HepG2 (cell line): ENCODE measurements at regions of chr2 and their contacts with region 1.

Region 1: GRCh38 chr2:158179660-158180059 is 78.0 kb downstream of the UPP2 start:
- DNase-seq: peak; percentile 35
- ATAC-seq: peak; percentile 82
- H3K4me3 ChIP-seq: no peak overlapping the region
- H3K27ac ChIP-seq: no peak overlapping the region
- H3K4me1 ChIP-seq: peaks cover 51% of the 10 kb centered on the region
- H3K27me3 ChIP-seq: no peaks in the 10 kb centered on the region
- CTCF ChIP-seq: peak; percentile 81
- EP300 ChIP-seq: no peak
- POLR2A ChIP-seq: no peak
- RAD21 ChIP-seq: peak; percentile 78

Region 2: GRCh38 chr2:157741819-157742484 is 437.7 kb before region 1 on chr2:
- CTCF ChIA-PET with region 1: no interaction called
- POLR2A ChIA-PET with region 1: no interaction called
- in situ Hi-C with region 1: no loop called
- intact Hi-C with region 1: no loop called
- DNase-seq: no peak
- ATAC-seq: no peak
- H3K4me3 ChIP-seq: no peak overlapping the region
- H3K27ac ChIP-seq: no peak overlapping the region
- H3K4me1 ChIP-seq: no peaks in the 10 kb centered on the region
- H3K27me3 ChIP-seq: no peaks in the 10 kb centered on the region
- CTCF ChIP-seq: no peak
- EP300 ChIP-seq: no peak
- POLR2A ChIP-seq: no peak
- RAD21 ChIP-seq: no peak

Region 3: GRCh38 chr2:158045362-158045761 is 134.3 kb before region 1 on chr2:
- CTCF ChIA-PET with region 1: no interaction called
- POLR2A ChIA-PET with region 1: no interaction called
- in situ Hi-C with region 1: loop called (anchors 10 kb)
- intact Hi-C with region 1: loop called (anchors 2 kb)
- DNase-seq: peak; percentile 68
- ATAC-seq: peak; percentile 99
- H3K4me3 ChIP-seq: no peak overlapping the region
- H3K27ac ChIP-seq: no peak overlapping the region
- H3K4me1 ChIP-seq: peaks cover 19% of the 10 kb centered on the region
- H3K27me3 ChIP-seq: peaks cover 0 to 16% of the 10 kb centered on the region in 2 experiments; a peak in 2 of 5 replicates
- CTCF ChIP-seq: peak; percentile 90
- EP300 ChIP-seq: no peak
- POLR2A ChIP-seq: no peak
- RAD21 ChIP-seq: peak; percentile 91

Region 4: DNA sequence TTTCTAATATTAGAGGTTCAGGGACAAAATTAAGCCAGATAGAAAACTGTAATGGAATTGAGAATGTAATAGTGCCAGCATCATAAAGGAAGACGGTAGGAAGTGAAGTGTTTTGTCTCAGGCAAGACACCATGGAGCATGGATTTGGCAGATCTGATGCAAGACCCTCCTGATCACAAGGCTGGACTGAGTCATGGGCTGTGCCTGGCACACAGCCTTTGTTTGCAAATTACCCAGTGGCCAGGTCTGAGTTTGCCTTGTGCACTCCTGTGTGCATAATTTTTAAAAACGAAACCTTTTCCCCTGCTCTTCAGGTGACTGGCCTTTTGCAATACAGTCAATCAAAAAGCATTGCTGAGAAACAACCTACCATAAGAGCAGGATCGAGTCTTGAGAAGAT is 79.9 kb before region 1 on chr2:
- CTCF ChIA-PET with region 1: interaction called, 3 read pairs
- POLR2A ChIA-PET with region 1: no interaction called
- in situ Hi-C with region 1: no loop called
- intact Hi-C with region 1: loop called (anchors 5 kb)
- DNase-seq: peak; percentile 47
- ATAC-seq: no peak
- H3K4me3 ChIP-seq: no peak overlapping the region; a peak in 1 of 6 replicates
- H3K27ac ChIP-seq: no peak overlapping the region
- H3K4me1 ChIP-seq: peaks cover 64% of the 10 kb centered on the region
- H3K27me3 ChIP-seq: no peaks in the 10 kb centered on the region
- CTCF ChIP-seq: no peak
- EP300 ChIP-seq: no peak
- POLR2A ChIP-seq: no peak
- RAD21 ChIP-seq: no peak

Region 5: DNA sequence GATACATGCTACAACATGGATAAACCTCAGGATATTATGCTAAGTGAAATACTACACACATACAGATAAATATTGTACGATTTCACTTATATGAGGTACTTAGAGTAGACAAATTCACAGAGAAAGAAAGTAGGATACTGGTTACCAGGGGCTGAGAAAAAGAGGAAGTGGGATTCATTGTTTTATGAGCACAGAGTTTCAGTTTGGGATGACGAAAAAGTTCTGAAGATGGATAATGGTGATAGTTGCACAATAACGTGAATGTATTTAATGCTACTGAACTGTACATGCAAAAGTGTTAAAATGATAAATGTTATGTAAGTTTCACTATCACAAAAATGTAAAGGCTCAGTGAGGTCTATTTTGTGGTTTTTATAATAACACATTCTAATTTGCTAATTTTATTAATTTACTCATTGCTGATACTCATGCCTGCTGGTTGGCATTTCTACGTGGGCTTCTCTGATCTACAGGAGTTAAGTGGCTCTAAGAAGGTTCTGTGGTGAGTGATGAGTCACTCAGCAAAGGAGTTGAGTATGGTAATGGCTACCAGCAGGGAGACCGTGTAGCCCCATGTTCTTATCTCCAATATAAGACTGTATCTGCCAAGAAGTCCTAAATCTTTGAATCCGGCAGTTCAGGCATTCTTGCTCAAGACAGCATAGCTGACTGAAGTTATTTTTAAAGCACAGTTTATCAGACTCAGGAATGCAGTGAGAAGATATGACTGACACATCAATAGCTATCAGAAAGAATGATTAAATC is 36.9 kb before region 1 on chr2:
- CTCF ChIA-PET with region 1: no interaction called
- POLR2A ChIA-PET with region 1: no interaction called
- in situ Hi-C with region 1: no loop called
- intact Hi-C with region 1: no loop called
- DNase-seq: no peak
- ATAC-seq: no peak
- H3K4me3 ChIP-seq: no peak overlapping the region
- H3K27ac ChIP-seq: no peak overlapping the region
- H3K4me1 ChIP-seq: peaks cover 22% of the 10 kb centered on the region
- H3K27me3 ChIP-seq: no peaks in the 10 kb centered on the region
- CTCF ChIP-seq: no peak
- EP300 ChIP-seq: no peak
- POLR2A ChIP-seq: no peak
- RAD21 ChIP-seq: no peak

Region 6: DNA sequence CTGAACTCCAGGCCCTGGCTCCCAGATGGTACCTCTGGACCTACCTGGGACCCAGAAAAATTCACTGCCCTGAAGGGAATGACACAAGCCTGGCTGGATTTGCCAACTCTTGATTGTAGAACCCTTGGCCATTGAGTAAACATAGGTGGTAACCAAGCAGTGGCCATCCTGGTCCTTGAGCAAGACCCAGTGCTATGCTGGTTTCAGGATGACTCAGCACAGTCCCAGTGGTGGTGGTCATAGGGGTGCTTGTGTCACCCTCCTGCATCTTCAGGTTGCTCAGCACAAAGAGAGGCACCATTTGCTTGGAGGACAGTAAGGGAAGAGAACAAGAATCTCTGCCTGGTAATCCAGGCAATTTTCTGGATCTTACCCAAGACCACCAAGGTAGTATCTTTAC is 25.1 kb before region 1 on chr2:
- CTCF ChIA-PET with region 1: no interaction called
- POLR2A ChIA-PET with region 1: no interaction called
- in situ Hi-C with region 1: no loop called
- intact Hi-C with region 1: no loop called
- DNase-seq: no peak
- ATAC-seq: no peak
- H3K4me3 ChIP-seq: no peak overlapping the region
- H3K27ac ChIP-seq: no peak overlapping the region
- H3K4me1 ChIP-seq: no peaks in the 10 kb centered on the region
- H3K27me3 ChIP-seq: no peaks in the 10 kb centered on the region; a peak in 2 of 5 replicates
- CTCF ChIP-seq: no peak
- EP300 ChIP-seq: no peak
- POLR2A ChIP-seq: no peak
- RAD21 ChIP-seq: no peak

Region 7: DNA sequence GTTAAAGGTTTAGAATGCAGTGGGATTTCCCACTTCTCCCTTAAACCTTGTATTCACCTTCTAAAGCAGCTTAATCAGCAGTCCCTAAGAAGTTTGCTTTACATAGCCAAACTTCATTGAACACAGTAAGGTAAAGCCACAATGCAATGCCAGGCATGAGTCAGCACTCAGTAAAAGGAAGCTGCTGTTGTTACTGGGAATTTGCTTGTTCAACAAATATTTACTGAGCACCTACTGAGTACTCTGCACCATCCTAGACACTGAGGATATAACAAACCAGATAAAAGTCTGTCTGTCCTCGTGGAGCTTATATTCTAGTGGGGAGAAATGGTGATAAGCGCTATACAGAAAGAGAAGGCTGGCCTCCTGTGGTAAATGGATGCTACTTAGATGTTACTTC is 439.8 kb after region 1 on chr2:
- CTCF ChIA-PET with region 1: no interaction called
- POLR2A ChIA-PET with region 1: no interaction called
- in situ Hi-C with region 1: no loop called
- intact Hi-C with region 1: loop called (anchors 5 kb)
- DNase-seq: peak; percentile 70
- ATAC-seq: peak; percentile 82
- H3K4me3 ChIP-seq: no peak overlapping the region
- H3K27ac ChIP-seq: peak overlapping the region; percentile 47
- H3K4me1 ChIP-seq: peaks cover 22% of the 10 kb centered on the region
- H3K27me3 ChIP-seq: no peaks in the 10 kb centered on the region
- CTCF ChIP-seq: no peak
- EP300 ChIP-seq: peak in 1 of 2 experiments; percentile 56; a peak in 1 of 4 replicates
- POLR2A ChIP-seq: no peak
- RAD21 ChIP-seq: no peak

Region 8: GRCh38 chr2:158745044-158745865 is 565.6 kb after region 1 on chr2:
- CTCF ChIA-PET with region 1: interaction called, 6 read pairs
- POLR2A ChIA-PET with region 1: no interaction called
- in situ Hi-C with region 1: no loop called
- intact Hi-C with region 1: loop called (anchors 1 kb)
- DNase-seq: peak; percentile 64
- ATAC-seq: peak; percentile 90
- H3K4me3 ChIP-seq: no peak overlapping the region
- H3K27ac ChIP-seq: no peak overlapping the region
- H3K4me1 ChIP-seq: peaks cover 30% of the 10 kb centered on the region
- H3K27me3 ChIP-seq: peaks cover under 1 to 31% of the 10 kb centered on the region in 2 experiments; a peak in 4 of 5 replicates
- CTCF ChIP-seq: peak; percentile 80
- EP300 ChIP-seq: no peak
- POLR2A ChIP-seq: no peak
- RAD21 ChIP-seq: peak; percentile 57